ENCODE measurements at regions of chr10 and their contacts with region 1.

Region 1: GRCh38 chr10:97318772-97319651 is at the start of gene FRAT1:
- DNase-seq: peak; percentile 93
- ATAC-seq: peak; percentile 74
- H3K4me3 Mint-ChIP-seq: peak within 1 kb of the TSS; percentile 97
- H3K27ac Mint-ChIP-seq: peak within 1 kb of the TSS; percentile 98
- H3K4me1 Mint-ChIP-seq: peaks cover 23% of the 10 kb centered on the region
- H3K27me3 Mint-ChIP-seq: peaks cover 5% of the 10 kb centered on the region
- total RNA-seq, gene FRAT1: 11.0 to 11.7 TPM

Region 2: DNA sequence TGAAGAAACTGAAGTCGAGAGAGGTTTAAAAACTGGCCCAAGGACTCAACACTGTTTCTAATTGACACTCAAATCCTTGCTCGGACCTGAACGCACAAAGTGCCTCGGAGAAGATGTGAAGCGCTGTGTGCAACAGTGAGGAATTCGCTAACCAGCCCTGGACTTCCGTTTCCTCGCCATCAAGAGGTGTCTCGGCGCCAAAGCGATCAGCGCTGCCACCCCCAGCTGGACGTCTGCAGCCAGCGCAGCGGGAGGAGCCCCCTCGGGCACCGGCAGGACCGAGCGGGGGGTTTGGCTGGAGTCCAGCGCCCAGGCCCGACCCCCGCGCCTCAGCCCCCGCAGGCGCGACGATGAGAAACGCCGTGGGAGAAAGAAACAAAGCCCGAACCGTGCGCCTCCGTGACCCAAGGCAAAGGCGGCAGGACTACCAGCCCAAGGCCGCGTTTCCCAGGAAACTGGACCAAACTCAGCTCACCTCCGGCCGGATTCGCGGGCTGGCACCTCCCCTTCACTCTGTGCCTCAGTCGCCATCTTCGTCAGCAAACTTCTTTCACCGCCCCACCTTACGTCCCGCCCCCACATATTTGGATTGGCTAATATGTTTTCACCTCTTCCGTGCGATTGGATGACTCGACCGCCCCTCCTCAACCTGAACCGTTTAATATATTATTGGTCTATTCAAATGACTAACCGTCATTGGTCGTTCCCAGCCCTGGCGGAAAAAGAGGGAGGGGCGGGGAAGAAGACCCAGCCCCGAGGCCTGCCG is 26.7 kb before region 1 on chr10 and contains the start of gene ARHGAP19:
- POLR2A ChIA-PET with region 1: interaction called, 21 read pairs
- DNase-seq: peak; percentile 82
- ATAC-seq: peak; percentile 100
- H3K4me3 Mint-ChIP-seq: peak within 1 kb of the TSS; percentile 89
- H3K27ac Mint-ChIP-seq: peak within 1 kb of the TSS; percentile 88
- H3K4me1 Mint-ChIP-seq: peaks cover 25% of the 10 kb centered on the region
- H3K27me3 Mint-ChIP-seq: peaks cover 2% of the 10 kb centered on the region
- total RNA-seq, gene ARHGAP19: 35.4 to 44.5 TPM

Region 3: DNA sequence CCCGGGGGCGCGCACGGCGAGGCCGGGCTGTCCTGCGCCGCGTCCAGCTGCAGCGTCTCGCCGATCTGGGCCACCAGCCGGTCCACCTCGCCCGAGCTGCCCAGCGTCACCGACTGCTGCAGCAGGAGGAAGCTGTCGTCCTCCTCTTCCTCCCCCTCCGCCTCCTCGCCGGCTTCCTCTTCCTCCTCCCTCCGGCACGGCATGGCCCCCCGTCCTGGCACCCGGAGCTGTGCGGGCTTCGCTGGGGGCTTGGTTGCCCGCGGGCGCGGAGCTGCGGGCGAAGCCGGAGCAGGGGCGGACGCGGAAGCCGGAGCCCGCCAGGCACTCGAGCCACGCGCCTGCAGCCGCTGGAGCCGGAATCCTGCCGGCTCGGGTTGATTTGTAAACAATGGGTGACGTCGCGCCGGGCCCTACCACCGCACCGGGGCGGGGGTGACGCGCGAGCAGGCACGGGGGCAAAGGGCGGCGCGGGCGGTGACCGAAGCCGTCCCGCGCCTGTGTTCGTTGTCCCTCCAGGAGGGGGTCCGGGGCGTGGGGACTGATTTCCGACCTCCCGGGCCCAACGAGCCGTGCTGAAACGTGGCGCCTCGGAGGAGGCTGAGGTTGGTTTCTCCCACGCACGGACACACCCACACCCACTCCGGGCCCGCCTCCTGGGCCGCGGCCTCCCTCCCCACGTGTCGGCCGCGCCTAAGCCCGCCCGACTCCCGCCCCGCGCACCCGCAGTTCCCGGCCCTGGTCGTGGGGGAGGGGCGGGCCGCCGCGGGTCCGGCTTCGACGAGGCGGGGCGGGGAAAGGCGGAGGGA is 15.6 kb after region 1 on chr10 and contains the start of gene FRAT2:
- POLR2A ChIA-PET with region 1: interaction called, 54 read pairs
- DNase-seq: peak; percentile 93
- ATAC-seq: peak; percentile 84
- H3K4me3 Mint-ChIP-seq: peak within 1 kb of the TSS; percentile 92
- H3K27ac Mint-ChIP-seq: peak within 1 kb of the TSS; percentile 87
- H3K4me1 Mint-ChIP-seq: peaks cover 30% of the 10 kb centered on the region
- H3K27me3 Mint-ChIP-seq: peaks cover 28% of the 10 kb centered on the region
- total RNA-seq, gene FRAT2: 15.3 to 16.7 TPM

Measured in activated naive CD8-positive, alpha-beta T cell treated with anti-CD3 and anti-CD28 coated beads, Interleukin-2, amount 10 ng/mL, durations not matched to agents 7 days and 5 days (primary cell).